Caco-2 (cell line): ENCODE measurements at regions of chr5 and their contacts with region 1.

Region 1: DNA sequence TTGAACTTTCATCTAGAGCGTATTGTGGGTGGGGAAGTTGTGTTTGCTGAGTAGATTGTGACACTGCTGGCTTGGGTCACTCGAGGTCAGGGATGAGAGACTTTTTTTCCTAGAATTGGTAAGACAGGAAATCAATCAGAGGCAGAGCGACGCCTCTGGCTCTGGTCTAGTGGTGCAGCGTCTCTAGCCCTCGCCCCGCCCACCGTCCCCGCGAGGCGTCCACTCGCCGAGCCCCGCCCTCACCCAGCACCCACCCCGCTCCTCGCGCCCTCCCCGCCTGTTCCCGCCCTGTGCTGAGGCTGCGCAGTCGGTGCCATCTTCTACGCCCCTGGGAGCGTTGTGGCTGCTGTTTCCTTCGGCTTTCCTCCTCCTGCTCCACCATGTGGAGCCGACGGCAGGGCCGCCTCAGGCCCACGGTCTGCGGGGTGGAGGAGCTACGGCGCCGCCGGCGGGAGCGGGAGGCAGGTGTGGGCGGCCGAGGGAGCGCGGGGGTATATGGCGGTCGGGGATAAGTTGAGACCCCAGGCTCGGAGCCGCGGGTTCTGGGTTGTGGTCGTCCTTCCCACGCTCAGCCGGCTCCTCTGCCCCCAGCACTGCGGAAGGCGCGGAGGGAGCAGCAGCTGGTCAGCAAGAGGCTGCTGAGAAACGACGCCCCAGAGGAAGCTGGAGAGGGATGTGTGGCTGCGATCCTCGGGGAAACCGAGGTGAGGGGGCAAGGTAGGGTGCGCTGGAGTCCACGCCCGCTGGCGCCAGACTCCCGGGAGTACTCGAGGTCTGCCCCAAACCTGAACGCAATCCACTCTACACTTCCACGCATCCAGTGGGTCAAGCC is at the start of gene TMCO6:
- DNase-seq: peak; percentile 97 to 98
- H3K4me3 ChIP-seq: peak within 1 kb of the TSS; percentile 96
- H3K4me3 Mint-ChIP-seq: peak within 1 kb of the TSS; percentile 83
- H3K27ac Mint-ChIP-seq: peak within 1 kb of the TSS; percentile 96
- H3K4me1 ChIP-seq: peaks cover 17% of the 10 kb centered on the region
- H3K4me1 Mint-ChIP-seq: peaks cover 27% of the 10 kb centered on the region
- H3K27me3 ChIP-seq: no peaks in the 10 kb centered on the region
- H3K27me3 Mint-ChIP-seq: no peaks in the 10 kb centered on the region
- CTCF ChIP-seq: peak; percentile 74 to 77
- total RNA-seq, gene TMCO6: 37.8 and 46.4 TPM in 2 replicates

Region 2: DNA sequence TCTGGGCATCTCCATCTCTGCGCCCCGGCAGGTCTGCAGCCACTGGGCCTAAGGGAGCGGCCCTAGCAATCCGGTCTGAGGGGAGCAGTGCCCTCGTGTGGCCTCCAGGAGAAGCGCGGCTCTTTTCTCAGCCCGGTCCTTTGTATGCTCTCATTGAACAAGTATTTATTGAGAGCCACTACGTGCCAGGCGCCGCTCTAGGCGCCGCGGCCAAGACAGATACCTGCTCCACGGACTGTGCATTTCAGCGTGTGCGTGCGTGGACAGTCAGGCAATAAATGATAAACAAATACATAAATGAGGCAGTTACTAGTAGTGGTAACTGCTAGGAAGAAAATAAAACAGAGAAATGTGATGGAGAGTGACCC is 281.7 kb before region 1 on chr5:
- CTCF ChIA-PET with region 1: no interaction called
- POLR2A ChIA-PET with region 1: no interaction called
- intact Hi-C with region 1: loop called (anchors 5 kb)
- DNase-seq: peak; percentile 88
- H3K4me3 ChIP-seq: no peak overlapping the region; the same call in 1 of the 2 replicates
- H3K4me3 Mint-ChIP-seq: peak overlapping the region; percentile 58
- H3K27ac Mint-ChIP-seq: peak overlapping the region; percentile 87
- H3K4me1 ChIP-seq: peaks cover 26% of the 10 kb centered on the region
- H3K4me1 Mint-ChIP-seq: peaks cover 22% of the 10 kb centered on the region
- H3K27me3 ChIP-seq: no peaks in the 10 kb centered on the region
- H3K27me3 Mint-ChIP-seq: no peaks in the 10 kb centered on the region
- CTCF ChIP-seq: peak; percentile 87 to 96

Region 3: DNA sequence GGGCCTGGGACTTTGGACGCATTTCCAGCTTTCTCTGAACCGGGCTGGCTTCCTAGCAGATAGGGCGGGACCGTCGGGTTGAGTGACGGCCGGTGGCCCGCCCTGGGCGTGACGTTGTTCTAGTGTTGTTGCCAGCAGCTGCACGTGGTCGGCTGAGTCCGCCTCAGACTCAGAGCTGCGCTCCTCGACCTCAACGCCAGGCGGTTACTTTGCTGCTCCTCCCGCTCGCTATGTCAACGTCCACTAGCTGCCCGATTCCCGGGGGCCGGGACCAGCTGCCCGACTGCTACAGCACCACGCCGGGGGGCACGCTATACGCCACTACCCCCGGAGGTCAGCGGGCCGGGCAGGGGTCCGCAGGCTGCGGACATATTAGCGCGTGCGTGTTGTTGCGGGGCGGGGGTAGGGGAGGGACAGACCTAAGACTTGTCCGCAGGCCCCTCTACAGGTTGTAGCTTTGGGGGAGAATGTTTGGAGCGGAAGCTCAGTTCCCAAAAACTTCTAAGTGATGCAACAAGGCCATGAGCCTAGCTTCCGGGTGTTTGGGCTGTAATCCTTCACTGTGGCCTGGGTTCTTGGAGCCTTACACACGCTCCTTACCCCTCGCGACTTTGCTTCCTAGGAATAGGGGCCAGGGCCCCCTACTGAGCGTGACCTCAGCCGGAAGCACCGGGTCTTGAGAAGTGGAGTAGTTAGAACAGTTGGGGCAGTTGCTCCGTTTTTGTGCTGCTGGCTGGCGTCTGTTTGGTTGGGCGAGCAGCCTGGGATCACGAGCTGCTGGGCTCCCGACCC is 91.7 kb before region 1 on chr5 and contains the start of gene EIF4EBP3:
- CTCF ChIA-PET with region 1: interaction called, 7 read pairs
- POLR2A ChIA-PET with region 1: interaction called, 4 read pairs
- intact Hi-C with region 1: loop called (anchors 1 kb)
- DNase-seq: peak; percentile 97
- H3K4me3 ChIP-seq: peak within 1 kb of the TSS; percentile 38
- H3K4me3 Mint-ChIP-seq: peak within 1 kb of the TSS; percentile 69
- H3K27ac Mint-ChIP-seq: peak within 1 kb of the TSS; percentile 88
- H3K4me1 ChIP-seq: peaks cover 13% of the 10 kb centered on the region
- H3K4me1 Mint-ChIP-seq: peaks cover 19% of the 10 kb centered on the region
- H3K27me3 ChIP-seq: no peaks in the 10 kb centered on the region
- H3K27me3 Mint-ChIP-seq: no peaks in the 10 kb centered on the region
- CTCF ChIP-seq: peak; percentile 37 to 48
- total RNA-seq, gene EIF4EBP3: 7.6 and 8.0 TPM in 2 replicates

Region 4: GRCh38 chr5:140564196-140565023 is 75.0 kb before region 1 on chr5 and contains the starts of genes APBB3 and SLC35A4:
- CTCF ChIA-PET with region 1: no interaction called
- POLR2A ChIA-PET with region 1: interaction called, 15 read pairs
- intact Hi-C with region 1: loop called (anchors 1 kb)
- DNase-seq: peak; percentile 96 to 98
- H3K4me3 ChIP-seq: peak within 1 kb of the TSS; percentile 68
- H3K4me3 Mint-ChIP-seq: peak within 1 kb of the TSS; percentile 84
- H3K27ac Mint-ChIP-seq: peak within 1 kb of the TSS; percentile 93
- H3K4me1 ChIP-seq: peaks cover 7% of the 10 kb centered on the region; the same call in 1 of the 2 replicates
- H3K4me1 Mint-ChIP-seq: peaks cover 6% of the 10 kb centered on the region
- H3K27me3 ChIP-seq: no peaks in the 10 kb centered on the region
- H3K27me3 Mint-ChIP-seq: no peaks in the 10 kb centered on the region
- CTCF ChIP-seq: no peak
- total RNA-seq, gene APBB3: 23.4 and 25.1 TPM in 2 replicates
- total RNA-seq, gene SLC35A4: 79.5 and 91.3 TPM in 2 replicates

Region 5: DNA sequence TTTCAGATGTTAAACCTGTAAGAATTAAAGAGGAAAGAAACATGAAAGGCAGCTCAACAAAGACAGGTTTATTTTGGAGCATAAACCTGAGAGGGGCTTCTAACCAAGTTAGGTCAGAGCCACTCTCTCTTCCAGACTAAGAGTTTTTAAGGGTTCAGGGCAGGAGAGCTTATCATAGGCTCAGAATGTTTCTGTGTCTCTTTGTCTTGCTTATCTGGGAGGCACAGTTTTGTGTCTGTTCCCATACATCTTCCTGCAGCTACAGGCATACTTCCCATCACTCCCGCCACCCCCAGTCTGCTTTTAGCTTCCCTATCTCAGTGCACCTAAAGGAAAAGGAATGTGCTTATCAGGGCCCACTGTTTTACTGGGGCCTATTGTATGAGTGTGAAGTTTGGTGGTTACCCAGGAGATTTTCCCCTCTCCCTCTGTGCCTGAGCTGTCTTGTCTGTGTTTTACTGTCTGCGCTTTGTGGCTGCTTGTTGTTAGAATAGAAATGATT is 28.3 kb before region 1 on chr5:
- CTCF ChIA-PET with region 1: interaction called, 3 read pairs
- POLR2A ChIA-PET with region 1: no interaction called
- intact Hi-C with region 1: loop called (anchors 2 kb)
- DNase-seq: peak; percentile 44 to 50
- H3K4me3 ChIP-seq: no peak overlapping the region
- H3K4me3 Mint-ChIP-seq: no peak overlapping the region
- H3K27ac Mint-ChIP-seq: peak overlapping the region; percentile 63
- H3K4me1 ChIP-seq: no peaks in the 10 kb centered on the region
- H3K4me1 Mint-ChIP-seq: no peaks in the 10 kb centered on the region
- H3K27me3 ChIP-seq: no peaks in the 10 kb centered on the region
- H3K27me3 Mint-ChIP-seq: no peaks in the 10 kb centered on the region
- CTCF ChIP-seq: no peak

Region 6: GRCh38 chr5:140710899-140711552 is 71.7 kb after region 1 on chr5:
- CTCF ChIA-PET with region 1: no interaction called
- POLR2A ChIA-PET with region 1: interaction called, 4 read pairs
- intact Hi-C with region 1: loop called (anchors 1 kb)
- DNase-seq: peak; percentile 96 to 97
- H3K4me3 ChIP-seq: peak overlapping the region; percentile 46
- H3K4me3 Mint-ChIP-seq: peak overlapping the region; percentile 93
- H3K27ac Mint-ChIP-seq: peak overlapping the region; percentile 98
- H3K4me1 ChIP-seq: no peaks in the 10 kb centered on the region
- H3K4me1 Mint-ChIP-seq: peaks cover 7% of the 10 kb centered on the region
- H3K27me3 ChIP-seq: no peaks in the 10 kb centered on the region
- H3K27me3 Mint-ChIP-seq: peaks cover 4% of the 10 kb centered on the region
- CTCF ChIP-seq: no peak